Heart left ventricle (tissue), 16 donors: ENCODE measurements at regions of chr7 and their contacts with region 1.

Region 1: DNA sequence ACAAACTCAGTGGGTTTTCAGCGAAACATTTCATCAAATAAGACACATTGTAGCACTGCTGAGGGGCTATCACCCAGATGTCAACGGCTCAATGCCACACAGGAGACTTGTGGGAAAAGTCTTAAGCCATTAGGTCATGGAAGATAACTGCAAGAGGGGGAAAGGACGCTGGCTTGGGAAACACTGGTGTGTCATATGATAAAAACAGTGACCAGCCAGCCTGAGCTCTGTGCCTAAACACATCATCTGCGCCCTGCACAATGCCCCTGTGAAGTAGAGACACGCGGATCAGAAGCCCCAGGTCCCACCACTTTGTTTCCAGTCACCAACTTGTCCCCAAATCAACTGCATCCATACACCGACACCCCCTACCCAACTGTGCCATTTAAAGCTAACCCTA is 116.7 kb downstream of the TNS3 start:
- DNase-seq: peak in 4 of 5 donors; percentile 48 to 76 (median 63)
- ATAC-seq: peak; percentile 77 to 85 (median 82)
- H3K4me3 ChIP-seq: no peak overlapping the region
- H3K27ac ChIP-seq: peak overlapping the region; percentile 35 to 85 (median 56)
- H3K4me1 ChIP-seq: peaks cover 4 to 52% (median 26%) of the 10 kb centered on the region in 12 donors
- H3K27me3 ChIP-seq: no peaks in the 10 kb centered on the region
- CTCF ChIP-seq: no peak
- POLR2A ChIP-seq: no peak

Region 2: GRCh38 chr7:47379629-47380324 is 85.4 kb before region 1 on chr7:
- intact Hi-C with region 1: no loop called
- DNase-seq: peak; percentile 77 to 93 (median 85)
- ATAC-seq: peak; percentile 90 to 94 (median 92)
- H3K4me3 ChIP-seq: peak overlapping the region in 5 of 12 donors; percentile 9 to 32 (median 24)
- H3K27ac ChIP-seq: peak overlapping the region; percentile 29 to 90 (median 74)
- H3K4me1 ChIP-seq: peaks cover 0 to 49% (median 29%) of the 10 kb centered on the region in 12 donors
- H3K27me3 ChIP-seq: no peaks in the 10 kb centered on the region
- CTCF ChIP-seq: peak in 1 of 12 donors; percentile 14
- POLR2A ChIP-seq: no peak

Region 3: DNA sequence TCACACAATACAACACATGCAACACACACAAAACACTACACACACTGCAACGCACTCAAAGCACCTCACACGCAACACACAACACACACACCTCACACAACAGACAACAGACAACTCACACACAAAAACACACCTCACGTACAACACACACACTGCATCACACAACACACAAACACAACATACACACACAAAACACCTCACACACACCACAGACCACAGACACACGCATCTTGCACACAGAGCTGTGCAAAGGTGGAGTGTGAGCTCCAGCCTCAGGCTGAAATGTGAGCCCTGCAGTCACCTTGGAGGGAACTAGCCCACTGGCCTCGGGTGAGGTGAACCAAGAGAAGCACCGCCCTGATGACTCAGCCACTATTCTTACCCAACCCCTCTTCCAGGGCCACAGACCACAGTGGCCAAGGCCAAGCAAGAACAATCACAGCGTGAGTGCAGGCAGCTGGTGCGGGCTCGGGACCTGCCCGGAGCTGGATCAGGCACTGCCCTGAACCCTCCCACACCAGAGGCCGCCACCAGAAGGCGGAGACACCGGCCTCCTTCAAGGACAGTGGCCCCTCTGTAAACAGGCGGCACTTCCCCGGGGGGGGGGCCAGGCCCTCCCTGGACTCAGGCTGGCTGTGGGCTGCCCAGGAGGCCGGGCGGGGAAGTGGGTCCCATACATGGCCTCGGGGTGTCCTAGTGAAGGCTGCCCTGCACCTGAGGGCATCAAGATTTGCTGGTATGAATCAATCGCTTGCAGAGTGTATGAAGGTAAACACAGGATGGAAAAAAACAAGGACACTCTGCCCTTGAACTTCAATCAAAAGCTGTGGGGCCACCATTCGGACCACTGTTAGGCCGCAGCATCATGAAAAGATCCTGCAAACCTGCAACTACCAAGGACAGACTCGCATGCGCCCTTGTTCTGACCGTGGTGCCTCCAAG is 10.0 kb after region 1 on chr7:
- intact Hi-C with region 1: loop called in 1 of 10 experiments (anchors 1 kb)
- DNase-seq: peak; percentile 86 to 95 (median 90)
- ATAC-seq: peak; percentile 94 to 96 (median 95)
- H3K4me3 ChIP-seq: peak overlapping the region in 1 of 12 donors; percentile 1
- H3K27ac ChIP-seq: peak overlapping the region; percentile 66 to 94 (median 86)
- H3K4me1 ChIP-seq: peaks cover 0 to 50% (median 34%) of the 10 kb centered on the region in 12 donors
- H3K27me3 ChIP-seq: no peaks in the 10 kb centered on the region
- CTCF ChIP-seq: peak in 8 of 12 donors; percentile 21 to 54 (median 34)
- POLR2A ChIP-seq: no peak